ENCODE measurements at regions of chr1 and their contacts with region 1.

Region 1: DNA sequence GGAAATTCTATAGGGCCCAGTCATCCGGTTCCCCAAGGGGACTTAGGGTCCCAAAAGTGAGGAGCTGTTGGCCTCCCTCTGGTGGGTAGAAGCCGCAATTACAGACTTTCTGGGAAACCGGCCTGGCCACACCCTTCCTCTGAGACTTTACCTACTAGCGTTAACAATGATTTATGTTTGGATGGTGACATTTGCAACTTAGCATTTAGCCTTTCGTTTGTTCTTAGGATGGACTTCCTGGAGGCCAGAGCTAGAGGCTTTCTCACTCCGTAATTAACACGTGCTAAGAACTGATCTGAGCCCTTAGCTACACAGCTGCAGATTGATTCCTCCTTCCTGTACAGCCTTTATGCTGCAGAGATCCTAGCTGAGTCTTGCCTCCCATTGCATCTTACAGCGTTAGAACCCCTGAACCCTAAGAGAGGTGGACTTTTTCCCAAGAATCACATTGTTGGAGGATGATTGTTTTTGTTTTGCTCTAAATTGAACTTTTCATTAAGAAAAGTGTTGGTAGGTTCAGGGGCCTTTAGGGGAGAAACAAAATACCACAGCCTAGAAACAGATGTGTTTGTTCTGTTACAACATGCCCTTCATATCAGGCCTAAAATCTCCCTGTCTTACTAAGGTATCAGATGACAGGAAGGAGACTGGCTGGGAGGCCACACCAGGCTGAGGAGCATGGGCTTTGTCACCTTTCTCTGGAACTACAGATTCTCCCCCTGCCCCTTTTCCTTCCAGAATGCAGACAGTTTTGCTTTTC is 2.0 kb downstream of the S100A11 start:
- DNase-seq: peak; percentile 79
- ATAC-seq: peak; percentile 62
- H3K4me3 ChIP-seq: peak overlapping the region; percentile 64 to 70
- H3K27ac ChIP-seq: peak overlapping the region; percentile 79
- H3K4me1 ChIP-seq: peaks cover 19 to 28% of the 10 kb centered on the region in 2 experiments
- H3K27me3 ChIP-seq: no peaks in the 10 kb centered on the region
- CTCF ChIP-seq: peak; percentile 52 to 79 (median 78); a peak in 5 of 6 replicates
- POLR2A ChIP-seq: no peak
- RAD21 ChIP-seq: peak; percentile 53

Region 2: DNA sequence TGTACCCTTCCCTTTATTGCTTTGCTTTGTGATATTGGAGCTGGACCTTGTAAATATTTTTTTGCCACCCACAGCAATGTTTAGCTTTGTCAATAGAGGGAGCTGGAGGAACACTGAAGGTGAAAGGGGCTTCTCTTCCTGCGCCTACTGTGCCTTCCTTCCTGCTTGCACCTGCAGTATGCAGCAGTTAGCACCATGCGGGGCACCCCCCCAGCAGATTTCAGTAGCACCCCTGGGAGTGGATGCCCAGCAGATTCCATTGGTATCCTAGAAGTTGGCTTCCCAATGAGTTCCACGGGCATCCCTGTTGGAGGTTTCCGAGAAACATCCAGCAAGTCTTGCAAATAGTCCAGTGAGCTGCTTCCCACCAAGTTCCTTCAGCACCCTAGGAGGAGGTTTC is 66.8 kb before region 1 on chr1:
- CTCF ChIA-PET with region 1: interaction called, 26 read pairs
- POLR2A ChIA-PET with region 1: interaction called, 3 read pairs
- RAD21 ChIA-PET with region 1: no interaction called
- intact Hi-C with region 1: no loop called
- DNase-seq: no peak
- ATAC-seq: peak; percentile 71
- H3K4me3 ChIP-seq: no peak overlapping the region
- H3K27ac ChIP-seq: no peak overlapping the region
- H3K4me1 ChIP-seq: peaks cover 35 to 50% of the 10 kb centered on the region in 2 experiments; a peak in 3 of 4 replicates
- H3K27me3 ChIP-seq: no peaks in the 10 kb centered on the region
- CTCF ChIP-seq: peak; percentile 79 to 91 (median 85)
- POLR2A ChIP-seq: no peak
- RAD21 ChIP-seq: peak; percentile 98

Measured in HCT116 (cell line).